Activated naive CD4-positive, alpha-beta T cell treated with anti-CD3 and anti-CD28 coated beads, Interleukin-2, amount 10 ng/mL, durations not matched to agents 7 days and 5 days (primary cell): ENCODE measurements at regions of chr20 and their contacts with region 1.

Region 1: GRCh38 chr20:46520976-46521579 is 7.7 kb upstream of the ZNF334 start:
- DNase-seq: peak; percentile 71
- H3K4me3 Mint-ChIP-seq: no peak overlapping the region
- H3K27ac Mint-ChIP-seq: no peak overlapping the region
- H3K4me1 Mint-ChIP-seq: no peaks in the 10 kb centered on the region
- H3K27me3 Mint-ChIP-seq: peaks cover 41% of the 10 kb centered on the region

Region 2: GRCh38 chr20:46539113-46539512 is 18.0 kb after region 1 on chr20:
- CTCF ChIA-PET with region 1: interaction called, 12 read pairs
- DNase-seq: no peak
- H3K4me3 Mint-ChIP-seq: no peak overlapping the region
- H3K27ac Mint-ChIP-seq: no peak overlapping the region
- H3K4me1 Mint-ChIP-seq: peaks cover 10% of the 10 kb centered on the region
- H3K27me3 Mint-ChIP-seq: peaks cover 63% of the 10 kb centered on the region

Region 3: GRCh38 chr20:46562373-46563169 is 41.5 kb after region 1 on chr20:
- CTCF ChIA-PET with region 1: interaction called, 12 read pairs
- DNase-seq: peak; percentile 78
- H3K4me3 Mint-ChIP-seq: no peak overlapping the region
- H3K27ac Mint-ChIP-seq: no peak overlapping the region
- H3K4me1 Mint-ChIP-seq: peaks cover 20% of the 10 kb centered on the region
- H3K27me3 Mint-ChIP-seq: peaks cover 25% of the 10 kb centered on the region

Region 4: DNA sequence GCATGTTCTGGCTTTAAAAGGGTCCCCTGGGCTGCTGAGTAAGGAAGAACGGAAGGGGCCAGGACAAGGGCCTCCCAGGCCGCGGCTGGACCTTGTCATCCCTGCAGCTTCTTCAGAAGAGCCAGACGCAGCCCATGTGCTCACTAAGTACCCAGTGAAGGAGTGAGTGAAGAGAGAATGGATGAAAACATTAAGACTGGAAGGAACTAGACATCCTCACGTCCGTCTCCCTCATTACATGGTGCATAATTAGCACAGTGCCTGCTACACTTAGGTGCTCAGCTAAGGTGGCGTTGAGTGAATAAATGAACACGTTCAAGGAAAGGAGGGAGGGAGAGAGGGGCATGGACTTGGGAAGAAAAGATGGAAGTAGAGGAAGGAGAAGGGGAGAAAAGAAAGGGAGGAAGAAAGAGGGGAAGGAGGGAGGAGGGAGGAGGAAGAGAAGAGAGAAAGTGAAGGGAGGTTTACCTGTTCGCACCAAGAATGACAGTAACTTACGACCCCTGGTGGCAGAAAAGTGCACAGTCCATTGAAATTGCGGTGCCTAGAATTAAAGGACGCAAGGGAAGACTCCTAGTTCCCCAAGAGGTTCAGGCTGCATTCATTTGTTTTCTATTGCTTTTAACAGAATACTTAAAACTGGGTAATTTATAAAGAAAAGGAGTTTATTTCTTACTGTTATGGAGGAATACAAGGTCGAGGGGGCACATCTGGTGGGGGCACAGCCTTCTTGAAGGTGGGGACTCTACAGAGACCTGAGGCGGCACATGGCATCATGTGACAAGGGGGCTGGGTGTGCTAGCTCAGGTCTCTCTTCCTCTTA is 160.2 kb after region 1 on chr20:
- CTCF ChIA-PET with region 1: interaction called, 28 read pairs
- DNase-seq: peak; percentile 84
- H3K4me3 Mint-ChIP-seq: no peak overlapping the region
- H3K27ac Mint-ChIP-seq: peak overlapping the region; percentile 9
- H3K4me1 Mint-ChIP-seq: peaks cover 14% of the 10 kb centered on the region
- H3K27me3 Mint-ChIP-seq: no peaks in the 10 kb centered on the region